Posterior vena cava (tissue), 2 donors: ENCODE measurements at regions of chr2 and their contacts with region 1.

Region 1: GRCh38 chr2:74079522-74080341 is 68.0 kb downstream of the BOLA3 start:
- DNase-seq: no peak

Region 2: DNA sequence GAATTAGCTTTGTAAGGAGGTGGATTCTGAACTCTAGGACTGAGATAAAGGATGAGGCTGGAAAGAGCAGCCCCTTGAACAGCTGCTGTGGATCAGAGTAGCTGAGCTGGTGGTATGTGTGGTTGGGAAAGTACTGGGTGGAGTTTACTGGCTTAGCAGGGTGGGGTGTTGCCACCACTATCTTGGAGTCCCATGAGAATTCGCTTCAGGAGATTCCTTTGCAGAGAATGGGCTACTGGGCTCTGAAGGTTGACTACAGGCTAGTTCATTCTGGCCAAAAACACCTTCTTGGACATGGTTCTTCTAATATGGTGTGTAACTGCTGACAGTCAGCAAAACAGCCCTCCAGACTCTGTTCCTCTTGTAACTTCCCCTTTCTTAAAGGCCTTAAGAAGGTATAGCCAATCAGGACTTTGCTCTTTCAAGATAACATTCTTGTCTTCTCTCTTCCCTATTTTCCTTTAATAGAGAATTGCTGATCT is 42.3 kb before region 1 on chr2:
- intact Hi-C with region 1: no loop called
- DNase-seq: no peak

Region 3: DNA sequence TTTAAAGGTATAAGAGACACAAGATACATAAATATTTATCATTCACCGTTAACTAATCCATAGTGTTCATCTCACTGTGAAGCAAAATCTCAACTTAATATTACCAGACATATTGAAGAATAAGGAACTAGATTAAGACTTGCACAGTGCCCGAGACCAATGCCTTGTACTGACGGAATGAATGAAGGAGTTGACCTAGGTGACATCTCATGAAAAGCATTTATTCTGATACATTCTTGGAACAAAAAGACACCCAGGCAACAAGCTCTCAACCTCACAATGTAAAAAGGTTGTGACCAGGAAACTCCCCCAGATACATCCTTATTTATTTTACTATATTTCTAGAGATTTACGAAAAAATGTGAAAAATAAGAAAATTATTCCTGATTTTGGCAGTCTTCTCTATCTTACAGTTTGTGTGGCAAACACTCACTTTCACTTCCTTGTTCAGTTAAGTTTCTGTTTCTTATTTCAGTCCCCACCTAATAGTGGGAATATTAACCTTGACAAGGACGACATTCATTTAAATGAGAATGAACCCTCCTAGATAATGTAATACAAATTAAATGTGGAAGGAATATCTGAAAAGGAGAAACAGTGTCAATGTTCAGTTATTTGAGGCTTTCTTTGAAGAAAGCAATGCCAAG is 540.0 kb after region 1 on chr2:
- intact Hi-C with region 1: loop called in 1 of 2 experiments (anchors 5 kb)
- DNase-seq: no peak